ENCODE measurements at regions of chr11 and their contacts with region 1.

Region 1: GRCh38 chr11:46984987-46985386 is 48.4 kb downstream of the CSTPP1 start:
- DNase-seq: no peak
- H3K4me3 ChIP-seq: no peak overlapping the region
- H3K27ac ChIP-seq: no peak overlapping the region
- H3K4me1 ChIP-seq: peaks cover 13% of the 10 kb centered on the region
- H3K27me3 ChIP-seq: no peaks in the 10 kb centered on the region
- CTCF ChIP-seq: no peak

Region 2: GRCh38 chr11:47083913-47084312 is 98.9 kb after region 1 on chr11:
- CTCF ChIA-PET with region 1: no interaction called
- POLR2A ChIA-PET with region 1: interaction called, 61 read pairs
- intact Hi-C with region 1: no loop called
- DNase-seq: peak in 1 of 2 experiments; percentile 41
- H3K4me3 ChIP-seq: no peak overlapping the region
- H3K27ac ChIP-seq: no peak overlapping the region
- H3K4me1 ChIP-seq: no peaks in the 10 kb centered on the region
- H3K27me3 ChIP-seq: no peaks in the 10 kb centered on the region
- CTCF ChIP-seq: no peak

Region 3: DNA sequence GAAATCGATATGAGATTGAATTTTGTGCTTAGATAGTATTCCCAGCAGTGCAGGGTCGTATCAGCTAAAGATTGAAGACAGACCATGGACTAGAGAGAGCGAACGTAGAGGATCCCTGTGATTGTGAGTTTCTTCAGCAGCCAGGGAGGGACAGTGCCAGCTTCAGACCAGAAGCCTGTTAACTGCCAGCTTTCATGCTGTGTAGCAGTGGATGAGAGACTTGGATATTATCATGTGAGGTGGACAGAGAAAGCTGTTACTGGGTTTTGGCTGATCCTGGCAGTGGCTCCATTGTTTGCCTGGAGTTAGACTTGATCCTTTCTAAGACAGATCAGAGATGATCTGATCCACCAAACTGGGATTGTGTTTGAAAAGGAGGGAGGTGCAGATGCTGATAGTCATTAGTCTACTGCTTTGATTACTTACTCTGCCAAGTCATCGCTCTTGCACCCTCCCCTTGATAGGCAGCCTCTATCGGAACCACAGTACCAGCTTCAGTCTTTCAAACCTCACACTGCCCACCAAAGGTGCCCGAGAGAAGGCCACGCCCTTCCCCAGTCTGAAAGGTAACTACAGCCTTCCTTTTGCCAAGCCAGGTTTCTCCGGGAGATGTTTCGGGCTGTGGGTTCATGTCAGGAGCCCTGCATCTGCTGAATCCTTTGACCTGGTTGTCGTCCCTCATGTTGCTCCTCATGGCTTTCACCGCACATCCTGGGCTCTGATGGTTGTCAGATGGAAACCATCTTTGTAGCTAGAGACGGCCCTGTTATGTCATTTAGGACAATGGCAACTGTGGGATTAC is 301.2 kb after region 1 on chr11:
- CTCF ChIA-PET with region 1: no interaction called
- POLR2A ChIA-PET with region 1: no interaction called
- intact Hi-C with region 1: no loop called
- DNase-seq: no peak
- H3K4me3 ChIP-seq: no peak overlapping the region
- H3K27ac ChIP-seq: no peak overlapping the region
- H3K4me1 ChIP-seq: no peaks in the 10 kb centered on the region
- H3K27me3 ChIP-seq: no peaks in the 10 kb centered on the region
- CTCF ChIP-seq: no peak